Activated CD4-positive, alpha-beta T cell treated with anti-CD3 and anti-CD28 coated beads for 36 hours (primary cell): ENCODE measurements at regions of chr3 and their contacts with region 1.

Region 1: DNA sequence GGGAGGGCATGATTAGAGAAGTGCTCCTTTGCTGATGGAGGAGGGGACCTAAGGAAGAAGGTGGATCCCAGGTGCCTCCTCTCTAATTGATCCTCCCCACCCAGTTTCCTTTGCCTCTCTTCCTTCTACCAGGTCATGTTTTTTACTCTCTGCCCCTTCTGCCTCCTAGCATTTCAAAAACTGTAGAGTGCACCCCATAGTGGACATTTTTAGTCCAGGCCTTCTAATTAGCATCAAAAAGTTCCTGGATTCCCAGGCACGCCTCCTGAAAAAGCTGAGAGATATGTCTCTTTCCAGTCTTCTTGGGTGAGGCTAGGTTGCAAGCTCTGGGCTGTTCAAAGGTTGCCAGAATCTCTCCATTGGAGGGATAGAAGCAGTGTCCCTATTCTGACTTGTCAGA is 18.7 kb upstream of the ITGB5 start:
- DNase-seq: no peak
- ATAC-seq: no peak
- H3K4me3 Mint-ChIP-seq: no peak overlapping the region
- H3K27ac Mint-ChIP-seq: no peak overlapping the region
- H3K4me1 Mint-ChIP-seq: peaks cover 2% of the 10 kb centered on the region
- H3K27me3 Mint-ChIP-seq: peaks cover 2% of the 10 kb centered on the region

Region 2: DNA sequence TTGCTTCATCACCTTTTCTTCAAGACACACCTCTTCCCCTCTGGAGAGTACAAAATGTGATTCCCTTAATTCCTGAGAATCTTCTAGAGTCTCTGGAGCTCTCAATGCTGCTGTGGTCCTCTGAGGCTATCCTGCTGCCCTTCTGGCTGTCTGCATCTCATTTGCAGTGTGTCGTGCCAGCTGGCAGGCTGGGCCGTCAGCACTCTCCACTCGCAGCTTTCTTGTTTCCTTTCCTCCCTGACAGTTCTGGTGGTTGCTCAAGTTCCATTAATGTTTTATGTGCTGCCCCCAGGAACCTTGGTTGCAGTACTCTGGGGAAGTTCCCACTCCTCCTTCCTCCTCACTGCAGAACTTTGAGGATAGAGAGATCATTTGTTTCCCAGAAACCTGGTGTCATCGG is 703.1 kb before region 1 on chr3:
- CTCF ChIA-PET with region 1: no interaction called
- POLR2A ChIA-PET with region 1: no interaction called
- intact Hi-C with region 1: no loop called
- DNase-seq: no peak
- ATAC-seq: no peak
- H3K4me3 Mint-ChIP-seq: no peak overlapping the region
- H3K27ac Mint-ChIP-seq: no peak overlapping the region
- H3K4me1 Mint-ChIP-seq: no peaks in the 10 kb centered on the region
- H3K27me3 Mint-ChIP-seq: peaks cover 18% of the 10 kb centered on the region

Region 3: DNA sequence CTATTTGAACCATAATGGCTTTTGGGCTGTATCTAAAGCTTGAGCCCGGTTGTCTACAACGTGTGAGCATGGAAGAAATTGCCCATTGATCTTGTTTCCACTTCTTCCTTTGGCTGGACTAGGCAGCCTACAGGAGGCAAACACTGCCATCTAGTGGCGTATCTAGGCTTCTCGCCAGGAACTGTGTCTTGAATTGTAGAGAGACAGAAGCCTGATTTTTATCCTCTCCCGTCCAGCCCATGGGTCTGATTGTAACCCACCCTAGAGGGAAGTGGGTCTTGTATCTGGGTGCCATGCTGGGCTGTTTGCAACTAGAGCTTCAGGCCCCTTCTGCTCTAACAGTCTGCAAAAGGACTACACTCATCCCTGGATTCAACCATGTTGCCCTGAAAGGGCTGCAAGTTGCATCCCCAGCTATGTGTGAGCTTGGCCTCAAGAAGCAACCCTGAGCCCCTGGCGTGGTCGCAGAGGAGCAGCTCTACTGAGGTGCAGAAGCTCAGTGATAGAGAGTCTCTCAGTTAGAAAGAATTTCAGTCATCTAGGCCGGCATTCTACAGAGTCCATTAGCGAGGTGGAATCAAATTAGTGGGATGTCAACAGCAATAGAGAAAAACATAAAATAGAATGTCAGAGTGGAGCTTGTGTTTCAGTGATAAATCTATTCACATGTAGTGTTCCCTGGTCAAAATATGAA is 345.8 kb before region 1 on chr3:
- CTCF ChIA-PET with region 1: no interaction called
- POLR2A ChIA-PET with region 1: no interaction called
- intact Hi-C with region 1: loop called (anchors 2 to 10 kb)
- DNase-seq: peak; percentile 76
- ATAC-seq: peak; percentile 47
- H3K4me3 Mint-ChIP-seq: no peak overlapping the region
- H3K27ac Mint-ChIP-seq: no peak overlapping the region
- H3K4me1 Mint-ChIP-seq: no peaks in the 10 kb centered on the region
- H3K27me3 Mint-ChIP-seq: peaks cover 17% of the 10 kb centered on the region

Region 4: DNA sequence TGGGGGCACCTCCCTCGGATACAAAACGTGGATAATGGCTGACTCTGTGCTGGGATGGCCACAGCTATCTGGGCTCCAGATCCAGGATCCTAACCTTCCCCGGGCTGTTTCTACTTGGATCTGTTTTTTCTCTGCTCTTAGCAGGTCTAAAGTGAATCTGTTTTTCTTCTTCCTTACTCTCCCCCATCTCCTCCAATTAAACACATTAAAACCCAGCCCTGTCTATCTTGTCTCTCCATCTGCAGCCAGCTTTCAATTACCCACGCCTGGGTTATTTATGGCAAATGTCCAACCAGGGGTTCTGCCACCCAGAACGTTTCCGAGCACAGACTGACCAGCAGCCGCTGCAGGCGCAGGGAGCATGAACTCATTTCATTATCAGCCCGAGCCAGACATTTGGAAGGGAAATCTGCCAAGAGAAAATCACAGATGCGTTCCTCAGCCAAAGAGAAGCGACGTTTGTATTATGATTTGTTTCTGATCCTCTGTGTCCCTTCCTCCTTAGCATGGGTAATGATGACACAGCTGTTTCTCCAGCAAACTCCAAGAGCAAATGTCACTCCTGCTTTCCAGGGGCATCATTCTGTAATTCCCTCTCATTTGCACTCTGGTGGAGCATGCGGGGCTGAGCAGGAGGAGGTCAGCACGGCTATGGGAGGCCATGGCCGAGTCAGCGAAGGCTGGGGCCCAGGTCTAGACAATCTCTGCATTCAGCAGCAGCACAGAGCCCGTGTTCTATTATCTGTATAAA is 133.6 kb before region 1 on chr3:
- CTCF ChIA-PET with region 1: interaction called, 10 read pairs
- POLR2A ChIA-PET with region 1: no interaction called
- intact Hi-C with region 1: no loop called
- DNase-seq: no peak
- ATAC-seq: no peak
- H3K4me3 Mint-ChIP-seq: no peak overlapping the region
- H3K27ac Mint-ChIP-seq: no peak overlapping the region
- H3K4me1 Mint-ChIP-seq: no peaks in the 10 kb centered on the region
- H3K27me3 Mint-ChIP-seq: peaks cover 8% of the 10 kb centered on the region

Region 5: DNA sequence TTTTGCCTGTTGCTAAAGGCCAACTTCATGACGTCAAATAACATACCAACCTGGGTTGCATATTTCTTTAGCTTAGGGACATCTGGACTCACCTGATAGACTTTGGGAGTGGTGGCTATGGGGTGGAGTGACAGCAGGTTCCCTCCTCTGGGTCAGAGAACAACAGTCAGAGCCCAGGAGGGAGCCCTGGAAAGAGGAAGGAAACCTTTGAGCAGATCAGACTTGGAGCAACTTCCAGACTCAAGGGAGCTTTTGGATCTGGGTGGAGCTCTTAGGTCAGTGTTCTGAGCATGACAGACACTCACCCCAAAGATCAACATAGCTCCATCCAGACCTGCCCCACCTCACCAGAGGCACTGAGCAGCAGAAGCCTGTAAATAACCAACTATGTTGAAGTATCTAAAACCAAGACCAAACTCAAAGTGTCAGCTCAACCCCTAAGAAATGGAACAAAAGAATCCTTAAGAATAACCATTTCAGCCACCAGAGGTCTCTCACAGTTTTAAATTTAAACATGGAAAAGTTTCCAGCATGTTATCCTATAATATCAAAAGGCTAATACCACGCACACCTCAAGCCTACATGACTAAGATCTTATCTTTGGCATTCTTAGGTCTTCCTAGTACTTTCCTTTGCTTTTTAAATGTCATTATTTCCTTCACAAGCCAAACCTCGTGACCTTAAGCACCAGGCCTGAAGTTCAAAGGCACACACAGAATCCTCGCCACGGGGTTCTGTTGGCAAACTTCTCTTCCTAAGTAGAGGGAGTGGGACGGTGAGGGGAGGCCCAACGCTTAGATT is 119.2 kb before region 1 on chr3:
- CTCF ChIA-PET with region 1: interaction called, 25 read pairs
- POLR2A ChIA-PET with region 1: no interaction called
- intact Hi-C with region 1: loop called in 1 of 2 experiments (anchors 2 kb)
- DNase-seq: no peak
- ATAC-seq: no peak
- H3K4me3 Mint-ChIP-seq: no peak overlapping the region
- H3K27ac Mint-ChIP-seq: no peak overlapping the region
- H3K4me1 Mint-ChIP-seq: peaks cover 4% of the 10 kb centered on the region
- H3K27me3 Mint-ChIP-seq: no peaks in the 10 kb centered on the region

Region 6: DNA sequence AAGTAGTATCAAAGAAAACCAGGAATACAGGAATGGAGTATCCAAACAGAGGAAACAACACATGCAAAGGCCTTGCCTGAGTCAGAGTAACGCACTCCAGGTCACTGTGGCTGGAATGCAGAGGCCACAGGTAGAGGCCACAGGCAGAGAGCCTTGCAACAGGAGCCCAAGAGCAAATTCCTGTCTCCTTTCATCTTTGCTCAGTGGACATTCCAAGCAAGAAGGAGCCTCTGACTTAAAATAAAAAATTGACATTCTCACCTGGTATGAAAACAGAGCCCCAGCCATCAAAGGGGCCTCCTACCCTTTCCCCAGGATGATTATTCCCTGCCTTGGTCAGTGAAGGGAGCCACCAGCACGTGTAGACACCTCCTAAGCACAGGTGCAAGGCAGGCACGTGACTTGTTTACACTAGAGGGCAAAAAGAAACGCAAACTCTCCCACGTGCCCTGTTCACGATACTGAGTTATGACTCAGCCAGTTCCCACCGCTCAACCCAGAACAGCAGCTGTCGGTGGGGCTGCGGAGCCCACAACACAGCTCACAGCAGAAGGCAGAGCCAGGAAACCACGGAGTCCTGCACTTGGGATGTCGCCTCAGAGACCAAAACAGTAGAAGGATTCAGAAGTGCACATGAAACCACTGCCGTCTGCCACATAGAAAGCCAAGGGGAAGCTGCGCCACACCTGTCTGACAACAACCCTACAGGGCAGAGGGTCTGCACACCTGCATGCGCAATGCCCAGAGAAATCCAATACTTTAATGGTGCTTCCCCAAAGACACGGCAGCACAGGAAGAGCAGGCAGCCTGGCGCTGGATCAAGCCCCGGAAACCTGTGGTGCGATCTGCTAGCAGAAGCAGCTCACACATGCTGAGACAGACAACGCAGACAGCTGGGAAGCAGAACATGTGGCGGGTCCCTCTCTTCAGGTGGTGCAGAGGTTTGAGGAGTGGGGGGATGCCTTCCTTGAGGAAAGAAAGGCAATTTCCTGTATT is 70.8 kb before region 1 on chr3:
- CTCF ChIA-PET with region 1: interaction called, 3 read pairs
- POLR2A ChIA-PET with region 1: no interaction called
- intact Hi-C with region 1: loop called in 1 of 2 experiments (anchors 5 kb)
- DNase-seq: peak; percentile 71
- ATAC-seq: peak; percentile 95
- H3K4me3 Mint-ChIP-seq: peak overlapping the region; percentile 56
- H3K27ac Mint-ChIP-seq: no peak overlapping the region
- H3K4me1 Mint-ChIP-seq: peaks cover 14% of the 10 kb centered on the region
- H3K27me3 Mint-ChIP-seq: peaks cover 14% of the 10 kb centered on the region

Region 7: GRCh38 chr3:124890282-124891190 is 15.3 kb before region 1 on chr3:
- CTCF ChIA-PET with region 1: interaction called, 21 read pairs
- POLR2A ChIA-PET with region 1: no interaction called
- intact Hi-C with region 1: no loop called
- DNase-seq: no peak
- ATAC-seq: no peak
- H3K4me3 Mint-ChIP-seq: no peak overlapping the region
- H3K27ac Mint-ChIP-seq: no peak overlapping the region
- H3K4me1 Mint-ChIP-seq: no peaks in the 10 kb centered on the region
- H3K27me3 Mint-ChIP-seq: peaks cover 25% of the 10 kb centered on the region

Region 8: GRCh38 chr3:125165189-125165947 is 259.5 kb after region 1 on chr3:
- CTCF ChIA-PET with region 1: no interaction called
- POLR2A ChIA-PET with region 1: no interaction called
- intact Hi-C with region 1: no loop called
- DNase-seq: no peak
- ATAC-seq: no peak
- H3K4me3 Mint-ChIP-seq: no peak overlapping the region
- H3K27ac Mint-ChIP-seq: no peak overlapping the region
- H3K4me1 Mint-ChIP-seq: no peaks in the 10 kb centered on the region
- H3K27me3 Mint-ChIP-seq: peaks cover 3% of the 10 kb centered on the region